A549 (cell line): ENCODE measurements at regions of chr22 and their contacts with region 1.

Region 1: DNA sequence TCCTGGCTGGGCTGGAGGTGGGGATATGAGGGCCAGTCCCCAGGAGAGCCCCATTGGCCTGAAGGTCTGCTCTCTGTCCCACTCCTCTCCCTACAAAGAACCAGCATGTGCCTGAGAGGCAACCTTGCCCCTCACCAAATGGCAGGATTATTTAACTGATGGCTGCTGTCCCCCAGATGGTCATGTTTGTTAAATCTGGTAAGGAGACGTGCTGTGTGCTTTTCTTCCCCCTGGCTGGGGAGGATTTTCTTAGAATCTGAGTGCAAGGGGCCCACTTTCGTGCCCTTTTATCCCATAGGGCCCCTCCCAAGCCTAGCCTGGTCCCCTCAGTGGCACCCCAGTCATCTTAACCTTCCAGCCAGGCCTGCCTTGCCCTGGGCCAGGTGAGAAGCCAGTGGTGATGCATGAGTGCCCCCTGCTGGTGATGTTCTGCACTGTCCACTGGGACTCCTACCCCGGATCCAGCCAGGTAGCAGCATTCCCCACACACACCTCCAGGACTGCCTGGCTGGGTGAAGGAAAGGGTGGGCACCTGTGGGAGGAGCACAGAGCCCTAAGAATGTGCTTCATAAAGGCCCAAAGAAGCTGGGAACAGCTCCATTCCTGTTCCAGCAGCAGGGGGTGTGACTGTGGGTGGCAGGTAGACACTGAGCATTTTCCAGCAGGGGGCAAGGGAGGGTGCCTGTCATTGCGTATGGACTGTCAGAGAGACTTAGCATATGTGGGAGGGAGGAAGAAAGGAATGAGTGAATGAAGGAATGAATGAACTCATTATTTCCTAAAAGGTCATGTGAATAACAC is 28.9 kb downstream of the MFNG start:
- DNase-seq: peak; percentile 67 to 70
- ATAC-seq: peak; percentile 81 to 90
- H3K4me3 ChIP-seq: no peak overlapping the region
- H3K27ac ChIP-seq: peak overlapping the region; percentile 91 to 99
- H3K4me1 ChIP-seq: peaks cover 33% of the 10 kb centered on the region
- CTCF ChIP-seq: peak; percentile 87
- EP300 ChIP-seq: no peak
- POLR2A ChIP-seq: no peak
- RAD21 ChIP-seq: peak; percentile 96 to 99

Region 2: GRCh38 chr22:37303821-37304274 is 153.4 kb before region 1 on chr22:
- CTCF ChIA-PET with region 1: interaction called, 13 read pairs
- POLR2A ChIA-PET with region 1: no interaction called
- DNase-seq: peak; percentile 67 to 82
- ATAC-seq: peak; percentile 80 to 83
- H3K4me3 ChIP-seq: no peak overlapping the region
- H3K27ac ChIP-seq: peak overlapping the region; percentile 79 to 93
- H3K4me1 ChIP-seq: peaks cover 56% of the 10 kb centered on the region
- CTCF ChIP-seq: no peak
- EP300 ChIP-seq: no peak
- POLR2A ChIP-seq: no peak
- RAD21 ChIP-seq: no peak

Region 3: DNA sequence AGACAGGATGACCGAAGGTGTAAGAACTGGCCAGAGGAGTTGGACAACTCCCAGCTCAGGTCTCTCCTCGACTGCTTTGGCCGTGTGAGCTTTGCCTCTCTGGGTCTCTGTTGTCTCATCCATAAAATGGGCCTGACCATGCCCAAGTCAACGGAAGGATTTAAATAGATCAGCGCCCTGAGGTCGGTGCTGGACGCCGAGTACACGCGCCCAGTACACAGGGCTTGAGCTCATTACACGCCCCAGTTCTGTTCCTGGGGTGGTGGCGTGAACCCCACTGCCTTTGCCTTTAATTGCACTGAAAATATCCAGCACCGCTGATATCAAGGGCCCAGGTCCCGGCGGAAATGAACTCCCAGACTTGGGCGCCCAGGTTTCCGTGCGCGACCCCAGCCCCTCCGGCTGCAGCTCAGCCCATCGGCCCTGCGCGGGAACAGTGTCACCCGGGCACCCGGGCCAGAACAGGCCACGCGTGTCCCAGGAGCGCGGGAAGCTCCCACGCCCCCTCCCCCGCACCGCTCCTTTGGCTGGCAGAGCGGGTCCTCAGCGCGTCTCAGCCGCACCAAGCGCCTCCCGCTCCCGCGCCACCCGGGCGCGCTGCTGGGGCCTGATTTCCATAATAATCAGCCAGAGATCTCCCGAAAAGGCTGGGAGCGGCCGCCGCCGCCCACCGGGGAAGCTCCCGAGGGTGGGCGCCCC is 132.8 kb before region 1 on chr22:
- CTCF ChIA-PET with region 1: interaction called, 26 read pairs
- POLR2A ChIA-PET with region 1: no interaction called
- DNase-seq: no peak
- ATAC-seq: no peak
- H3K4me3 ChIP-seq: no peak overlapping the region
- H3K27ac ChIP-seq: peak overlapping the region; percentile 61 to 94
- H3K4me1 ChIP-seq: peaks cover 71% of the 10 kb centered on the region
- CTCF ChIP-seq: no peak
- EP300 ChIP-seq: no peak
- POLR2A ChIP-seq: no peak
- RAD21 ChIP-seq: no peak

Region 4: DNA sequence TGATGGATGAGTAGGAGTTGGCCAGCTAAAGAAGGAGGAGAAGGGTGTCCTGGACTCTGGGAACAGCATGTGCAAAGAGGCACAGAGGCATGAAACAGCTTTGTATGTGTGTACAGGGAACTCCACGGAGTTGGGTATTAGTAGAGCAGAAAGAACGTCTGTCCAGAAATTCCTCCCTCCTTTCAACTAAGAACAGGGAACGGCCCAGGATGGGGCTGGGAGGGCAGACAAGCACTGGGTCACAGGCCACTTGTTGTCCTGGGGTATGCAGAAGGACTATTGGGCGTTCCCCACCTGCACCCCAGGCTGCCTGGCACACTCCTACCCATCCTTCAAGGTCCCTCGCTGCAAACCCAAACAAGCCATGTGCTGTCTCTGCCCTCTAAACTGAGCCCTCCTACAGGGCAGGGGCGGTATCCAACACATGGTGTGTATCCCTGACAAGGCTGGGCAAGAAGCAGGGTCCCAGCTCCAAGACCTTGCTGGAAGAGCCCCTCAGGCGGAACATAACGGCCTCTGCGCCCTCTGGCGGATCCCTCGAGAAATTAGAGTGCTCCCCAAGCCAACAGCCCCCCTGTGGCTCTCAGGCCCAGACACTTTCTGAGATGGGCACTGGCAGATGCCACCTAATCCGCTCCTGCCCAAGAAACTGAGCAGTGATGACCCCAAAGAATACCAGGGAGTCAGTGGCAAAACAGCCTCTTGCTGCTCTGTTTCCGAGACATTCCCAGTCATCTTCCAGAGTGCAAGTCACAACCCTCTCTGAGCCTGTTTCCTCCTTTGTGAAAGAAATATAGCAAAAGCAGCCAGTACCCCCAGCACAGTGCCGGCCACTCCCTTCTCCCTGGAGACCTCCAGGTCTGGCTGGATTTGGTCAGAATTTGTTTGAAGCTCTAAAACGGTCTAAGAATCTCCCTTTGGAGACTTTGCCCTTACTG is 28.4 kb before region 1 on chr22:
- CTCF ChIA-PET with region 1: interaction called, 114 read pairs
- POLR2A ChIA-PET with region 1: no interaction called
- DNase-seq: peak; percentile 53 to 64
- ATAC-seq: peak; percentile 28 to 74; a peak in 3 of 6 replicates
- H3K4me3 ChIP-seq: no peak overlapping the region
- H3K27ac ChIP-seq: peak overlapping the region; percentile 64 to 97
- H3K4me1 ChIP-seq: peaks cover 64% of the 10 kb centered on the region
- CTCF ChIP-seq: peak; percentile 74
- EP300 ChIP-seq: no peak
- POLR2A ChIP-seq: no peak
- RAD21 ChIP-seq: peak; percentile 60 to 64

Region 5: GRCh38 chr22:37442537-37442936 is 14.8 kb before region 1 on chr22:
- CTCF ChIA-PET with region 1: interaction called, 12 read pairs
- POLR2A ChIA-PET with region 1: no interaction called
- DNase-seq: peak in 1 of 2 experiments; percentile 49
- ATAC-seq: peak; percentile 54 to 77; a peak in 3 of 6 replicates
- H3K4me3 ChIP-seq: no peak overlapping the region
- H3K27ac ChIP-seq: peak overlapping the region; percentile 47 to 68
- H3K4me1 ChIP-seq: peaks cover 11% of the 10 kb centered on the region; the same call in 1 of the 3 replicates
- CTCF ChIP-seq: no peak
- EP300 ChIP-seq: no peak
- POLR2A ChIP-seq: no peak
- RAD21 ChIP-seq: no peak

Region 6: DNA sequence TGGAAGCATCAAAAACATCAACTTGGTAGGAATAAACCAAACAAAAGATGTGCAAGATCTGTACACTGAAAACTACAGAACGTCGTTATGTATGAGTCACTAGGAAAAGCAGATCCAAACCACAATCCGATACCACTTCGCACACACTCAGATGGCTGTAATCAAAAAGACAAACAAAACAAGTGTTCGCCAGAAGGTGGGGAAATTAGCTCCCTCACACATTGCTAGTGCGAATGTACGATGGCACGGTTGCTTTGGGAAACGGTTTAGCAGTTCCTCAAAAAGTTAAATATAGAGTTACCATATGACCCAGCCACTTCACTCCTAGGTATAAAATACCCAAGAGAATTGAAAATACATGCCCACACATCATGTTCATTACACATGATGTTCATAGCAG is 76.7 kb after region 1 on chr22:
- CTCF ChIA-PET with region 1: no interaction called
- POLR2A ChIA-PET with region 1: no interaction called
- DNase-seq: no peak
- ATAC-seq: no peak
- H3K4me3 ChIP-seq: no peak overlapping the region
- H3K27ac ChIP-seq: no peak overlapping the region
- H3K4me1 ChIP-seq: peaks cover 16% of the 10 kb centered on the region
- CTCF ChIP-seq: no peak
- EP300 ChIP-seq: no peak
- POLR2A ChIP-seq: no peak
- RAD21 ChIP-seq: no peak

Region 7: GRCh38 chr22:37566903-37567820 is 109.9 kb after region 1 on chr22:
- CTCF ChIA-PET with region 1: interaction called, 10 read pairs
- POLR2A ChIA-PET with region 1: no interaction called
- DNase-seq: peak; percentile 63 to 68
- ATAC-seq: peak; percentile 38 to 71; a peak in 5 of 6 replicates
- H3K4me3 ChIP-seq: no peak overlapping the region
- H3K27ac ChIP-seq: 0 out of 6 replicates have a peak overlapping the region, but pooled peaks of 1 of the 2 experiments have one; percentile 11
- H3K4me1 ChIP-seq: peaks cover 63% of the 10 kb centered on the region
- CTCF ChIP-seq: peak; percentile 74
- EP300 ChIP-seq: no peak
- POLR2A ChIP-seq: no peak
- RAD21 ChIP-seq: peak; percentile 83

Region 8: GRCh38 chr22:37676736-37677492 is 219.6 kb after region 1 on chr22:
- CTCF ChIA-PET with region 1: no interaction called
- POLR2A ChIA-PET with region 1: no interaction called
- DNase-seq: peak in 1 of 2 experiments; percentile 83
- ATAC-seq: peak; percentile 47 to 51
- H3K4me3 ChIP-seq: peak overlapping the region; percentile 64
- H3K27ac ChIP-seq: peak overlapping the region; percentile 93 to 97
- H3K4me1 ChIP-seq: peaks cover 33% of the 10 kb centered on the region
- CTCF ChIP-seq: no peak
- EP300 ChIP-seq: no peak
- POLR2A ChIP-seq: peak; percentile 29; the same call in 1 of the 2 replicates
- RAD21 ChIP-seq: no peak